Activated naive CD4-positive, alpha-beta T cell treated with anti-CD3 and anti-CD28 coated beads for 36 hours (primary cell): ENCODE measurements at regions of chr11 and their contacts with region 1.

Region 1: DNA sequence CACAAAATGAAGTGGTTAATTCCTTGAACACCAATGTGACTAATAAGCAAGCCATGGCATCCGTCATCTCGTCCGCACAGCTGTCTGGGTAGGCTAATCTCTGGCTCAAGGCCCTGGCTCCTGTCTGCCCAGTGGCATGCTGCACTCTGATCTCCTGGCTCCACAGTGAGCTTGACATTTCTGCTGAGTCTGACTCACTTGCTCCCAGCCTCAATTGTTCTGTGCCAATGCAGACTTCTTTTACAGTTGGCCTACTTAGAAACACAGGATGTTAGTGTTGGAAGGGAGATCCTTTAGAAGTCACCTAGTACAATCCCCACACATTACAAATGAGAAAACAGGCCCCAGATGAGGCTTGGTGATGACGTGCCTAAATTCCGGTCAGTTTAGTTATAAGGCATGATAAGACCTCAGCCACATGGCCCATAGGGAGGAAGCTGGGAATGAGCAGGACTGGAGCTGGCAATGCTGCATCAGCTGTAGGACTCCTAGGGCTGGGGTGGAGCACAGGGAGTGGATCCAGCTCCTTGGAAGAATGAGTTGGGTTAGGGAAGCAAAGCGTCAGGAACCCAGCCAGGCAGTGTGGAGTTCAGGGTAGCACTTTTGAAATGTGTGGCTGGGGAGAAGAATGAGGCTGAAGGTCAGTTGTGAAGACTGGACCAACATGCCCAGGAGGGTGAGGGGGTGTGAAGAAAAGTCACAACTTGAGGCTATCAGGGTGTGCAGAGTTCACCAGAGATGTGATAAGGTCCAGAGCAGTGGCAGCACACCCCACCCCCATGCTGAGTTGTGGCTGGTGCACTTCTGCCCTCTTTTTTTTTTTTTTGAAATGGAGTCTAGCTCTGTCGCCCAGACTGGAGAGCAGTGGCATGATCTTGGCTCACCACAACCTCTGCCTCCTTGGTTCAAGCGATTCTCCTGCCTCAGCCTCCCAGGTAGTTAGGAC is 70.2 kb upstream of the EED start:
- DNase-seq: no peak
- H3K4me3 Mint-ChIP-seq: no peak overlapping the region
- H3K27ac Mint-ChIP-seq: no peak overlapping the region
- H3K4me1 Mint-ChIP-seq: peaks cover 20% of the 10 kb centered on the region
- H3K27me3 Mint-ChIP-seq: no peaks in the 10 kb centered on the region

Region 2: DNA sequence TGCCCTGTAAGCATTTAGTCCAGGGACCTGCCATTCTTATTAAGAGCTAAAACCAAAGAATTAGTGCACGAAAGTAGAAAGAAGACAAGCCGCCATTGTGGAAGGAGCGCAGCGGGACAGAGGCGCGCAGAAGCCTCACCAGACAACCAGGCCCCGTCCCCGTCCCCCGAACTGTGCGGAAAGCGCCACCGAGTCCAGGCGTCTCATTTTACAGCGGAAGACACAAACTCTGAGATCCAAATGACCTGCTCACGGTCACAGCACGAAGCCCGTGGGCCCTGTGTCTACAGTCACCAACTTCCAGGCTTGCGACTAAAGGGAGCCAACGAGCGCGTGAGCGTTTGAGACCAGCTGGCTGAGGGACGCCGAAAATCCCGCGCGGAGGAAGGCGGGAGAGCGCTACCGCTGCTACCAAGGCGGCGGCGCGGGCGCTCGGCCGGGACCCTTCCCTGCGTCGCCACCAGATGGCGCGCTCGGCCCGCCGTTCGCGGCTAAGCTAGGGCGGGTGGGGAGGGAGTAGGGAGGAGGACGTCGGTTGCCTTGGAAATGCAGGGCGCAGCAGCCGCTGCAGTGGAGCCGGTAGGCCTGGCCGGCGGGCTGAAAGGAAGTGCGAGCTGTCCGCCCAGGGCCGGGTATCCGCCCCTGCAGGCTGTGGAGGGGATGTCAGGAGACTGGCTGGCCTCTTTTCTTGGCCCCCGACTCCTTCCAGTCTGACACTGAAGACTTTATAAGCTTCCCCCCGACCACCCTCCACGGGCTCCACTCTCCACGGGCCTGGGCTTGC is 319.6 kb before region 1 on chr11:
- CTCF ChIA-PET with region 1: no interaction called
- intact Hi-C with region 1: no loop called
- DNase-seq: peak; percentile 92
- H3K4me3 Mint-ChIP-seq: peak overlapping the region; percentile 88
- H3K27ac Mint-ChIP-seq: peak overlapping the region; percentile 89
- H3K4me1 Mint-ChIP-seq: peaks cover 7% of the 10 kb centered on the region
- H3K27me3 Mint-ChIP-seq: no peaks in the 10 kb centered on the region

Region 3: GRCh38 chr11:86041975-86042378 is 132.4 kb before region 1 on chr11:
- CTCF ChIA-PET with region 1: interaction called, 5 read pairs
- intact Hi-C with region 1: loop called (anchors 1 kb)
- DNase-seq: peak; percentile 77
- H3K4me3 Mint-ChIP-seq: no peak overlapping the region
- H3K27ac Mint-ChIP-seq: peak overlapping the region; percentile 73
- H3K4me1 Mint-ChIP-seq: peaks cover 69% of the 10 kb centered on the region
- H3K27me3 Mint-ChIP-seq: no peaks in the 10 kb centered on the region

Region 4: GRCh38 chr11:86116386-86116726 is 58.0 kb before region 1 on chr11:
- CTCF ChIA-PET with region 1: no interaction called
- intact Hi-C with region 1: loop called (anchors 1 kb)
- DNase-seq: peak; percentile 57
- H3K4me3 Mint-ChIP-seq: no peak overlapping the region
- H3K27ac Mint-ChIP-seq: peak overlapping the region; percentile 17
- H3K4me1 Mint-ChIP-seq: peaks cover 28% of the 10 kb centered on the region
- H3K27me3 Mint-ChIP-seq: peaks cover 5% of the 10 kb centered on the region

Region 5: GRCh38 chr11:86138958-86139357 is 35.4 kb before region 1 on chr11:
- CTCF ChIA-PET with region 1: no interaction called
- intact Hi-C with region 1: loop called (anchors 2 kb)
- DNase-seq: peak; percentile 48
- H3K4me3 Mint-ChIP-seq: no peak overlapping the region
- H3K27ac Mint-ChIP-seq: peak overlapping the region; percentile 25
- H3K4me1 Mint-ChIP-seq: peaks cover 13% of the 10 kb centered on the region
- H3K27me3 Mint-ChIP-seq: no peaks in the 10 kb centered on the region

Region 6: GRCh38 chr11:86230921-86231430 is 56.6 kb after region 1 on chr11:
- CTCF ChIA-PET with region 1: no interaction called
- intact Hi-C with region 1: loop called (anchors 1 kb)
- DNase-seq: no peak
- H3K4me3 Mint-ChIP-seq: no peak overlapping the region
- H3K27ac Mint-ChIP-seq: peak overlapping the region; percentile 15
- H3K4me1 Mint-ChIP-seq: peaks cover 62% of the 10 kb centered on the region
- H3K27me3 Mint-ChIP-seq: no peaks in the 10 kb centered on the region

Region 7: DNA sequence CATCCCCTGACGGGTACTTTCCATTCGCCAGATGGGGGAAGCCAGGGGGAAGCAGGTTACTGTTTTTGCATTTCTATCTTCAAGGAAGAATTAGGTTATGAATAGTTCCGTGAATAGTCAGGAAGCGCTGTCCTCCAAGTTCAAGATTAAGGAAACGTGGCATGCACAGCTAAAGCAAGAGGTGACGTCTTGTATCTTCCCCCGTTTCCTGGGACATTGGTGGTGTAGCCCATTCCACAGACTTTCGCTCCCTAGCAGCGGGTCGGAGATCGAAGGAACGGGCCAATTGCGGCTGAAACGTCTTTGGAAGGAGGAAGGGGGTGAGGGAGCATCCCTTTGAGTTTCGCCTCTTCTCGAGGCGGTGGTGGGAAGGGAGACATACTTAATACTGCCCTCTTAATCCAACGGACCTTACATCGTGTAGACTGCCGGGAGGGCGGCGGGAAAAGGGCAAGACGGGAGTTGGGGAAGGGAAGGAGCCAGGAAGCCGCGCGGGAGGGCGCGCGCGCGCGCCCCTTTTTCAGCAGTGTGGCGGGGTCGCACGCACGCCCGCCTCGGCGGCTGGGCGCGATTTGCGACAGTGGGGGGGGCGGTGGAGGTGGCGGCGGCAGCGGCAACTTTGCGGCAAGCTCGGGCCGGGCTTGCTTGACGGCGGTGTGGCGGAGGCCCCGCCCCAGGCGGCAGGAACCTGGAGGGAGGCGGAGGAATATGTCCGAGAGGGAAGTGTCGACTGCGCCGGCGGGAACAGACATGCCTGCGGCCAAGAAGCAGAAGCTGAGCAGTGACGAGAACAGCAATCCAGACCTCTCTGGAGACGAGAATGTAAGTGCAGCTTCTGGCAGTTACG is 70.4 kb after region 1 on chr11 and contains the start of gene EED:
- CTCF ChIA-PET with region 1: no interaction called
- intact Hi-C with region 1: no loop called
- DNase-seq: peak; percentile 94
- H3K4me3 Mint-ChIP-seq: no peak within 1 kb of the TSS
- H3K27ac Mint-ChIP-seq: no peak within 1 kb of the TSS
- H3K4me1 Mint-ChIP-seq: peaks cover 35% of the 10 kb centered on the region
- H3K27me3 Mint-ChIP-seq: no peaks in the 10 kb centered on the region
- total RNA-seq, gene EED: 60.4 to 61.0 TPM

Region 8: GRCh38 chr11:86265194-86265593 is 90.8 kb after region 1 on chr11:
- CTCF ChIA-PET with region 1: no interaction called
- intact Hi-C with region 1: no loop called
- DNase-seq: no peak
- H3K4me3 Mint-ChIP-seq: no peak overlapping the region
- H3K27ac Mint-ChIP-seq: no peak overlapping the region
- H3K4me1 Mint-ChIP-seq: peaks cover 37% of the 10 kb centered on the region
- H3K27me3 Mint-ChIP-seq: no peaks in the 10 kb centered on the region